Sigmoid colon (tissue), 7 donors: ENCODE measurements at regions of chr3 and their contacts with region 1.

Region 1: DNA sequence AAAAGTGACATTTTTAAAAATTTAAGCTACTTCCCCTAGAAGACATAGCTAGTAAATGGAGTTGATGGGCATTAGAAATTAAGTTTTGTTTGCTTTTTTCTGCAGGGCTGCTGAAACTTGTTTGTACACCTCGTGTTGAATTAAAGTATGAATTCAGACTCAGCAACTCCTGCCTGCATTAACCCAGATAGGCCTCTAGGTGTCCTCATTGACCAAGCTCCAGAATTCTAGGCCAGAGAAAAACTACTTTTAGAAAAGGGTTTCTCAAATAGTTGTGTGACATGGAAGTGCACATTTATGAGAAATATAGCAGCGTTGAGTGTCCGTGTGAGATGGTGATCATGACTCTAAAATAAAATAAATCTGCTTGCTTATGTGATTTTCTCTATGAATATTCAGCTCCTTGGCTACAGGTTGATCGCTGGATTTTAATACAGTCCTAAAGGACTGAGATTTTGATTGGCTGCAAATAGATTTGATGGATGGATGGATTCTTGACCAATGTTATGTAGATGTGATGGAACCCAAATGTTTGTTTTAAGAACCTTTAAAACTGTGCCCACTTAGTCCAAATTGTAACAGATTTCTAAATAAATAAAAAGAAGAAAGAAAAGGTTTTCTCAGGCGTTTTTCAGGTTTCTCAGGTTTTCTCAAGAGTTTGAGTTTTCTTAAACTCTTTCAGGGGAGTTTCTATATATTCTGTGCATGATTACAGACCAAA is 39.4 kb upstream of the LMOD3 start:
- DNase-seq: no peak
- H3K4me3 ChIP-seq: no peak overlapping the region
- H3K27ac ChIP-seq: no peak overlapping the region
- H3K4me1 ChIP-seq: no peaks in the 10 kb centered on the region
- H3K27me3 ChIP-seq: no peaks in the 10 kb centered on the region
- CTCF ChIP-seq: peak; percentile 71 to 92 (median 85)
- EP300 ChIP-seq: no peak
- POLR2A ChIP-seq: no peak

Region 2: GRCh38 chr3:69084326-69085167 is 77.2 kb before region 1 on chr3 and contains the start of gene ARL6IP5:
- intact Hi-C with region 1: no loop called
- DNase-seq: peak; percentile 96
- H3K4me3 ChIP-seq: peak within 1 kb of the TSS; percentile 67 to 94 (median 82)
- H3K27ac ChIP-seq: peak within 1 kb of the TSS; percentile 91 to 94 (median 94)
- H3K4me1 ChIP-seq: peaks cover 2 to 73% (median 61%) of the 10 kb centered on the region in 4 donors
- H3K27me3 ChIP-seq: no peaks in the 10 kb centered on the region
- CTCF ChIP-seq: no peak
- EP300 ChIP-seq: no peak
- POLR2A ChIP-seq: peak; percentile 58 to 78
- total RNA-seq, gene ARL6IP5: 82.1 to 181 (median 144) TPM

Region 3: GRCh38 chr3:69306239-69307185 is 144.8 kb after region 1 on chr3:
- intact Hi-C with region 1: loop called (anchors 1 kb)
- DNase-seq: peak; percentile 90
- H3K4me3 ChIP-seq: no peak overlapping the region
- H3K27ac ChIP-seq: peak overlapping the region; percentile 45 to 70 (median 60)
- H3K4me1 ChIP-seq: peaks cover 0 to 17% (median 13%) of the 10 kb centered on the region in 4 donors
- H3K27me3 ChIP-seq: no peaks in the 10 kb centered on the region
- CTCF ChIP-seq: peak; percentile 63 to 87 (median 84)
- EP300 ChIP-seq: peak in 1 of 4 donors; percentile 64
- POLR2A ChIP-seq: no peak

Region 4: DNA sequence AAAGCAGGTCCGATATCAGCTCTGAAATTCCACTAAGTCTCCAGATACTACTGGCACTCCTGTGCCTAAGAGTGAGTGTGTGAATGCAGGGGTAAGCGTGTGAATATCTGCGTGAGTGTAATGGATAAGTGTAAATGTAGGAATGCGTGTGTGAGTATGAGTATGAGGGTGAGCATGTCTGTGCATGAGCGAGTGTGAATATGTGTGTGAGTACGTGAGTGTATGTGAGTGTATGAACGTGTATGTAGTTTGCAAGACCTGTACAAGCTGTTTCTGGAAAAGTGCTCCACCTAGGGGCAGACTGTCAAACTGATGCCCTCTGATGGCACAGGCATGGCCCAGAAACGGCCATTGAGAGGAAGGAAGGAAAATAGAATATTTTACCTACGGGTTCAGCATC is 248.5 kb after region 1 on chr3:
- intact Hi-C with region 1: loop called (anchors 5 kb)
- DNase-seq: peak; percentile 74
- H3K4me3 ChIP-seq: no peak overlapping the region
- H3K27ac ChIP-seq: no peak overlapping the region
- H3K4me1 ChIP-seq: peaks cover 0 to 5% (median 0%) of the 10 kb centered on the region in 4 donors
- H3K27me3 ChIP-seq: no peaks in the 10 kb centered on the region
- CTCF ChIP-seq: peak in 3 of 4 experiments; percentile 65 to 71 (median 69)
- EP300 ChIP-seq: no peak
- POLR2A ChIP-seq: no peak

Region 5: DNA sequence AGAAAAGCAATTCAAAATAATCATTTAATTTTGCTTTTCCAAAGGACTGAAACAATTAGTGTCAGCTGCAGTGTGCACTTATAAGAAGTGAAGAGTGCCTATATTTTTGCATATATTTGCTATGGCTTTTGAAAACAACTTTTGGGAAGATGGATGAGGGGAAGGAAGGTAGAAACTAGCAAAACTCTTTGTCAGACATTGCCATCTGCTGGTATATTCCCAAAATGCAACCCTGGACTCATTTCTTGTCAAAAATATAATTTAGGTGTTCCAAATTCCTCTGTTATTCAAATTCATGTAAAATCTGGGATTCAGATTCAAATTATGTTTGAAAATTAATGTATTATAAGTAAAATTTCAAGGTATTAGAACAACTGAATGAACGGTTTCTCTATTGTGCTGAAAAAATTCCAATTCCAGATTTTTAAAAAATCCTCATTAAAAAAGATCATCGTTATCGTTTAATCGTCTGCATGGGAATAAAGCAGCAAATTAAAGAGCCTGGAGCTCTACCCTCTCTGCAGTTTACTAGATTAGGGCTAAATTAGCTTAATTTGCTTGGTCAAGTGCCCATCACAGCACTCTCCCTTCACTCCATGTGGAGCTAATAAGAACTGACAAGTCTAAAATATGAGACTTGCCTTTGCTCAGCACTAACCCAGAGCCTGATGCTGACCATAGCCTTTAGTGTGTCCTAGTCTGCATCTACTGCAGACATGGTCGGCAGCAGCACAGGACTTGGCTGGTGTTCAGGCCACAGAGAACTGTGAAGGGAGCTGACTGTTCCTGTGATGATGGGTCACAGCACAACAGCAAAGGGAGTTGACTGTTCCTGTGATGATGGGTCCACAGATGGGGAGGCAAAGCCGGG is 509.6 kb after region 1 on chr3:
- intact Hi-C with region 1: loop called (anchors 1 kb)
- DNase-seq: no peak
- H3K4me3 ChIP-seq: no peak overlapping the region
- H3K27ac ChIP-seq: no peak overlapping the region
- H3K4me1 ChIP-seq: peaks cover 0 to 5% (median 0%) of the 10 kb centered on the region in 4 donors
- H3K27me3 ChIP-seq: no peaks in the 10 kb centered on the region
- CTCF ChIP-seq: peak; percentile 43 to 74 (median 61)
- EP300 ChIP-seq: no peak
- POLR2A ChIP-seq: no peak